Dorsolateral prefrontal cortex (tissue), 120 donors: ENCODE measurements at regions of chr12 and their contacts with region 1.

Region 1: DNA sequence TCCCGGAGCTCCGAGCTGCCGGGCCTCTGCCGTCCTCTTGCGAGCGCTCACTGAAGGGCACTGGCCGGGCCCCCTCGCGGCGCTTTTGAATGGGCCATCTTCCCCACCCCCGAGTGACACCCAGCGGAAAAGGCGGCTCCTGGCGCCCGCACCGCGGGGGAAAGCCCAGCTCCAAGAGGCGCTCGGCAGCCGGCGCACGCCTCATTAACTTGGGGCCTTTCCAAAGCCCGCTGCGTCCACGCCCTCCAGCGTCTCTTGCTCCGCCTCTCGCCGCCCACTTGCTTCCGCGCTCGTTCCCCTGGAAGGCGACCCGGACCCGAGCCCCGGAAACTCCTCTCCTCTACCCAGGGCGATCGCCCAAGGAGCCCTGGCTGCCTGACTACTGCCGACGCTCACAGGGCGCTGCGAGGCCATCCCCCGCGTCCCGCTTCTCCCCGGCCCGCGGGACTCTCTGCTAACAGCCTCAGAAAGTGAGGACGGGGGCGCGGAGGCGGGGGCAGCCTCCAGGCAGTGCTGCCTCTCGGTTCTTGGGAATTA is at the start of gene PHLDA1:
- DNase-seq: peak; percentile 80 to 95 (median 92)
- H3K4me3 ChIP-seq: peak within 1 kb of the TSS; percentile 57 to 94 (median 82)
- H3K27ac ChIP-seq: peak within 1 kb of the TSS; percentile 35 to 99 (median 93)
- H3K27me3 ChIP-seq: no peaks in the 10 kb centered on the region
- CTCF ChIP-seq: peak in 54 of 56 donors; percentile 19 to 76 (median 56)
- total RNA-seq, gene PHLDA1: 9.0 to 26.9 (median 17.8) TPM

Region 2: DNA sequence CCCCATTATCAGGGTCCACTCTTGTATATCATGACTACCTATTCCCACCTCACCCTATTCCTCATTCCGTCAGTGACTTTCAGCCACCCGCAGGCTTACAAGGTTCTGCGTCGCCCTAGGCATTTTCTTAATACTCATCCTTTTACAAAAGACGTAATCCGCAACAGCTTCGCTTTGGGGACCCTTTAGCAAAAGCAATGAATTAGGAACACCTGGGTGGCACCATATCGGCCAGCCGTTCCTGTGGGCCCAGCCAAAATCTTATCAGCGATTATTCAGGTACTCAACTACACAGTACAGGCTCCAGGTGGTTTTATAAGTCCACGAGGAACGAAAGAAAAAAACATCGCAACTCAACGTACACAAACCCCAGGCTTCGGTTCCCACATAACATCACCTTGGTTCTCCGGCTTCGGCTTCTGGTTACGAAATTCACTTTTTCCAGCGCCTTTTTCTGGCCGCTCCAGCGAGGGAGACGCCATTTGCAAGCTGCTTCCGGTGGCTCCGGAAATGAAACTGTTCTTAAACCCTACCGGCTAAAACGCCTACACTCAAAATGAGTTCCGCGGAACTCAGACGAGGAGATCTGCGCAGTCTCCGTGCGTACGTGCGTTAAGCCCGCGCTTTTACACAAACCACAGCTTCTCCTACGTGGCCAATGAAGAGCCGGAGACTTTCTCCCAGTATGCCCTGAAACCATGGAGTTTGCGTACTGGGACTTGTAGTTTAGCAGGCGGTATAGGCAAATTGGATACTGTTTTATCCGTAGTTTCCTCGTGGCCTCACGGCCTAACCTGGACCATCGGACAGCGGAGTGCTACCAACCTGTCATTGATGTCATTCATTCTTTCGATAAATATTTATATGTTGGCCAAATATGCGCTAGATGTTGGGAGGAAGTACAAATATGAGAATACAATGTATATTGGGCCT is 520.2 kb before region 1 on chr12 and contains the start of gene KRR1:
- intact Hi-C with region 1: loop called in 1 of 2 experiments (anchors 5 kb)
- DNase-seq: peak; percentile 88 to 98 (median 95)
- H3K4me3 ChIP-seq: peak within 1 kb of the TSS; percentile 65 to 100 (median 89)
- H3K27ac ChIP-seq: peak within 1 kb of the TSS in 54 of 59 donors; percentile 14 to 86 (median 76)
- H3K27me3 ChIP-seq: no peaks in the 10 kb centered on the region
- CTCF ChIP-seq: peak in 44 of 56 donors; percentile 6 to 68 (median 36)
- total RNA-seq, gene KRR1: 35.1 to 68.2 (median 51.2) TPM

Region 3: DNA sequence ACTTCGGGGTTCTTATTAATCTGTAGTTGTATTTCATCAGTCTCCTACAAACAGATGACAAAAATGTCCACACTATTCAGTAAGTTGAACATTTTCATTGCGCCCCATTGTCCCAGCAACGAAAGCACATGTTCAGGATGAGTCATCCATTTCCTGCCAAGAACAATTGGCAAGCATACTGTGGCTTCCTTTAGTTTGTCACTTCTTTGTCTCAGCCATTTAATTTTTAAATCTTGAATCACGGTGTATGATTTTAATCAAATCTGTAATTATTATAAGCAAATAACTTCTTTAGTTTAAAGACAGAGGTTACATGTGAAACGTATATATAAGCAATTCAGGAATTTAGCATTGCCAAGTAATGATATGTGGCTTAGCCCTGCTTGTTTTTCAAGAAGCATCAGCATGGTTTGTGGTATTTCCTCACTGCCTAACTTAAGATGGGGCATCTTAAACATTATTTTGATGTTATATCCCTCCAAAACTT is 308.8 kb before region 1 on chr12:
- intact Hi-C with region 1: loop called in 1 of 2 experiments (anchors 5 kb)
- DNase-seq: peak in 7 of 10 donors; percentile 19 to 82 (median 54)
- H3K4me3 ChIP-seq: peak overlapping the region in 10 of 59 donors; percentile 0 to 27 (median 12)
- H3K27ac ChIP-seq: peak overlapping the region in 26 of 59 donors; percentile 9 to 79 (median 50)
- H3K27me3 ChIP-seq: no peaks in the 10 kb centered on the region
- CTCF ChIP-seq: peak in 7 of 56 donors; percentile 7 to 31 (median 21)

Region 4: GRCh38 chr12:75981247-75982168 is 50.1 kb before region 1 on chr12:
- intact Hi-C with region 1: no loop called
- DNase-seq: no peak
- H3K4me3 ChIP-seq: peak overlapping the region in 1 of 59 donors; percentile 10
- H3K27ac ChIP-seq: peak overlapping the region in 1 of 59 donors; percentile 34
- H3K27me3 ChIP-seq: no peaks in the 10 kb centered on the region
- CTCF ChIP-seq: no peak

Region 5: DNA sequence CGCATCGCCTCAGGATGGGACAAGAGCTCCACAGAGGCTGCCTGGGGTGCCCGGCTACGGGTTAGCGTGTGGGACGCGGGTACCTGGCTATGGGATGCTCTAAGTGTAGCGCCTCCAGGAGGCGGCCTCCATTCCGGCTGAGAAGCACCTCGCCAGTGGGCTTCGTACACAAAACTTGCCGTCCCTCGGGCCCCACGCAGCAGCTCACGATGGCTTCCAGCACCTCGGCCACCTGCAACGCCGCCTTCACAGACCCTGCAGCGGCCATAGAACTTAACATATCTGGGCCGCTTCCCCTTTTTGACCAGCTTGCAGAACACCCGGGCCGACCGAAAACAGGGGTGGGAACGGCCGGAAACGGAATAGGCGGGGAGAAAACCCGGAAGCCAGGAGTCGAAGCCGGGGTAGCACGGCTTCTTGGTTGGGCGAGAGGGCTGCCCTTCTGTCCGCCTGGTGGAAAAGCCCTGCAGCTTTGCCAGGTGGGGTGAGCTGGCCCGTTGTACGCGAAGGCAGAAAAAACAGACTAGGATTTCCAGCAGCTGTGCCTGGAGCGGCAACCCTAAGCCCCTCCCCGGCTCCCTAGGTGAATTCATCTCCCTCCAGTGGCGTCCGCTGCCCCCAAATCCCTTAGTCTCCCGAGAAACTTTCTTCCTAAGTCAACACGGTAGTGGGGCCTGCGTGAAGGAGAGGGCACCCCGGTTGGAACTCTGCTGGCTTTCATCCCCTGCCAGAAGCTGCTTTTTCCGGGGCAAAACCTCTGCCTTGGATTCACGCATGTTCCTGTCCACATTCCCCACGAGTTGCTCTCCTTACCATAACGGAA is 316.7 kb after region 1 on chr12 and contains the start of gene BBS10:
- intact Hi-C with region 1: loop called (anchors 2 kb)
- DNase-seq: peak; percentile 80 to 96 (median 92)
- H3K4me3 ChIP-seq: peak within 1 kb of the TSS; percentile 52 to 95 (median 82)
- H3K27ac ChIP-seq: peak within 1 kb of the TSS; percentile 76 to 97 (median 89)
- H3K27me3 ChIP-seq: no peaks in the 10 kb centered on the region
- CTCF ChIP-seq: peak in 55 of 56 donors; percentile 27 to 73 (median 57)
- total RNA-seq, gene BBS10: 9.8 to 20.9 (median 14.8) TPM